ENCODE measurements at regions of chr1 and their contacts with region 1.

Region 1: DNA sequence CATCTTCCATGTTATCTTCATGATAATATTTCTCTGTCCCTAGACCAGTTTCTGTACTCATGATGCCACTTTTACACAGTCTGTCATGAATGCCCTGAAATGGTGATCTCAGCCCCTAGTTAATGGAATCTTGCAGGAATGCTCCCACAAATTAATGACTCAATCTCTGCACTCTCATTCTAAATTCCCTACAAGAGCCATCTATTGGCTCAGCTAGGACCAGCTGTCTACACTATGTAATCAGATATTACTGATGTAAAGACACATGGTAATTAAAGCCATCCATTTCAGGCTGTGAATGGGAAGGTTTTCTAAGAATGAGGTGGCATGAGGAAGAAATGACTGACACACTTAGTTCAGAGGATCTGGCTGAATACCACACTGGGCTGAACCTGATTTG is 199.1 kb upstream of the KCND3 start:
- DNase-seq: no peak
- ATAC-seq: no peak

Region 2: GRCh38 chr1:112548547-112548946 is 359.9 kb after region 1 on chr1:
- intact Hi-C with region 1: no loop called
- DNase-seq: no peak
- ATAC-seq: no peak

Region 3: DNA sequence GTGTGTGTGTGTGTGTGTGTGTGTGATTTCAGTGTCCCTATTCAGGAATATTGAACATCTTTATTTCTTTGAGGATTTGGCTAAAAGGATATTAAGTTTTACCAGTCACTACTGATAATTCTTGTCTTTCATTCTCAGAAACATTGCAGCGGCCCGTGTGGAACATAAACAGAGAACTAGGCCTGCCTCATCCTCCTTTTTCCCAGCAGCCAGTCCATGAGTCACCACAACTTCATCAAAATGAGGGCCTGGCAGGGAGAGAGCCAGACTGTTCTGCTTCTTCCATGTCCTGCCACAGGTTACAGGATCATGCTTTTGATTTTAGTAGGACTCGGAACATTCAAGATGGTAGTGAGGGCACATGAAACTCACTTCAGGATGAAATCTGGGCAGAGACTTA is 935.1 kb after region 1 on chr1:
- intact Hi-C with region 1: loop called (anchors 5 kb)
- DNase-seq: no peak
- ATAC-seq: no peak